Mammary epithelial cell (primary cell): ENCODE measurements at regions of chr2 and their contacts with region 1.

Region 1: DNA sequence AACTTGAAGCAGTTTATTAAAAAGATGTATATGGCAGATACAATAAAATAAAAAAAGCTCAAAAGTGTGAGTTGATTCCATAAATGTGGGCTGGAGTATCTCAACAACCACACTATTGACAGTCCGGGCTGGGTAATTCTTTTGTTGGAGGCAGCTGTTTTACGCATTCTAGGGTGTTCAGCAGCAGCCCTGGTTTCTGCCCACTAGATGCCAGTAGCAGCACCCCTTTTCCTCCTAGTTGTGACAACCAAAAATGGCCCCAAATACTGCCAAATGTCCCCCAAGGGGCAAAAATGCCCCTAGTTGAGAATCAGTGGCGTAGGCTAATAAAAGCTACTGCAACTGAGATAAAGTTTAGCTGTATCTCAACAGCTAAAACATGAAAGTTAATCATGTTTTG is 44.8 kb downstream of the CHMP3 start:
- DNase-seq: peak; percentile 9
- H3K4me3 ChIP-seq: no peak overlapping the region
- H3K27ac ChIP-seq: no peak overlapping the region
- H3K4me1 ChIP-seq: no peaks in the 10 kb centered on the region
- H3K27me3 ChIP-seq: no peaks in the 10 kb centered on the region
- CTCF ChIP-seq: peak; percentile 38 to 57

Region 2: GRCh38 chr2:86552889-86553288 is 34.4 kb after region 1 on chr2:
- CTCF ChIA-PET with region 1: no interaction called
- dilution Hi-C with region 1: no loop called
- in situ Hi-C with region 1: no loop called
- intact Hi-C with region 1: no loop called
- DNase-seq: no peak
- H3K4me3 ChIP-seq: no peak overlapping the region
- H3K27ac ChIP-seq: no peak overlapping the region
- H3K4me1 ChIP-seq: peaks cover 5% of the 10 kb centered on the region
- H3K27me3 ChIP-seq: no peaks in the 10 kb centered on the region
- CTCF ChIP-seq: no peak

Region 3: GRCh38 chr2:86598966-86599365 is 80.5 kb after region 1 on chr2:
- CTCF ChIA-PET with region 1: no interaction called
- dilution Hi-C with region 1: loop called (anchors 5 kb)
- in situ Hi-C with region 1: no loop called
- intact Hi-C with region 1: no loop called
- DNase-seq: peak; percentile 68
- H3K4me3 ChIP-seq: no peak overlapping the region
- H3K27ac ChIP-seq: no peak overlapping the region
- H3K4me1 ChIP-seq: no peaks in the 10 kb centered on the region
- H3K27me3 ChIP-seq: no peaks in the 10 kb centered on the region
- CTCF ChIP-seq: no peak